Activated CD4-positive, alpha-beta memory T cell treated with anti-CD3 and anti-CD28 coated beads for 36 hours (primary cell): ENCODE measurements at regions of chr17 and their contacts with region 1.

Region 1: GRCh38 chr17:7484067-7484918 is at the start of gene POLR2A:
- DNase-seq: peak; percentile 97
- H3K4me3 Mint-ChIP-seq: peak within 1 kb of the TSS; percentile 98
- H3K27ac Mint-ChIP-seq: peak within 1 kb of the TSS; percentile 100
- H3K4me1 Mint-ChIP-seq: peaks cover 69% of the 10 kb centered on the region
- H3K27me3 Mint-ChIP-seq: no peaks in the 10 kb centered on the region
- total RNA-seq, gene POLR2A: 180 to 187 TPM

Region 2: GRCh38 chr17:7306911-7307686 is 177.2 kb before region 1 on chr17 and contains the start of gene EIF5A:
- CTCF ChIA-PET with region 1: no interaction called
- POLR2A ChIA-PET with region 1: interaction called, 5 read pairs
- intact Hi-C with region 1: loop called (anchors 1 kb)
- DNase-seq: peak; percentile 100
- H3K4me3 Mint-ChIP-seq: peak within 1 kb of the TSS; percentile 85
- H3K27ac Mint-ChIP-seq: peak within 1 kb of the TSS; percentile 97
- H3K4me1 Mint-ChIP-seq: peaks cover 29% of the 10 kb centered on the region
- H3K27me3 Mint-ChIP-seq: peaks cover 2% of the 10 kb centered on the region
- total RNA-seq, gene EIF5A: 774 to 776 TPM

Region 3: DNA sequence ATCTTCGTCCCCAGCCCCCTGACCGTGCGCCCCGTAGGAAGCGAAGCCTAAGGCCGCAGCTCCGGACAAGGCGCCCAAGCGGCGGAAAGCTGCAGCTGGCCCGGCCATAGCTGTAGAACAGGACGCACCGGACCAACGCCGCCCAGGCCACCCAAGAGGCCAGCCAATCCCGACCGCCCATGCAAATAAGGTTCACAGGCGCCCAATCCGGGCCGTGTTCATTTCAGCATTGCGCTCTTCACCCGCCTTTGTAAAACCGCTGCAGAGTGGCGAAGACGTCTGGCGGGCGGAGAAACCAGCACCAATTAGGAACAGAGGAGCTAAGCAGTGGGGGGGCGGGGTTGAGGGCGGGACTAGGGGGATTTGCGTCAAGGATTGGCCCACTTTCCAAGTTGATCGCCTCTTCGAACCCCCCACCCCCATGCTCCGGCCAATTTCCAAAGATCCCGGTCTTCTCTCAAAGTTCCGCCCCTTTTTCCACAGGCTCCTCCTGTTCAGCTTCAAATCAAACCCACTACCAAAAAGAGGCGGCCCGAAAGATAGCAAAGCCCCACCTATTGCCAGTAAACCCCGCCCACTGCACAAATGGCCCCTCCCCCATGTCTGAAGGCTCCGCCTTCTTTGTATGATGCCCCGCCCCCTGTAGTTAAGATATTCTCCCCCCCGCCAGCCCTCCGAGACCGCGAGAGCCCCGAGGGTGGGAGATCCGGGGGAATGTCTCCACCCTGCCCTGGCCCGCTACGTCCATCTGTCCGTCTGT is 80.1 kb before region 1 on chr17 and contains the start of gene TMEM256:
- CTCF ChIA-PET with region 1: no interaction called
- POLR2A ChIA-PET with region 1: interaction called, 5 read pairs
- intact Hi-C with region 1: loop called (anchors 1 kb)
- DNase-seq: peak; percentile 99
- H3K4me3 Mint-ChIP-seq: peak within 1 kb of the TSS; percentile 97
- H3K27ac Mint-ChIP-seq: peak within 1 kb of the TSS; percentile 92
- H3K4me1 Mint-ChIP-seq: peaks cover 25% of the 10 kb centered on the region
- H3K27me3 Mint-ChIP-seq: no peaks in the 10 kb centered on the region
- total RNA-seq, gene TMEM256: 87.0 to 88.5 TPM

Region 4: GRCh38 chr17:7454980-7455379 is 29.3 kb before region 1 on chr17:
- CTCF ChIA-PET with region 1: no interaction called
- POLR2A ChIA-PET with region 1: interaction called, 4 read pairs
- intact Hi-C with region 1: loop called (anchors 1 kb)
- DNase-seq: no peak
- H3K4me3 Mint-ChIP-seq: peak overlapping the region; percentile 93
- H3K27ac Mint-ChIP-seq: peak overlapping the region; percentile 96
- H3K4me1 Mint-ChIP-seq: peaks cover 13% of the 10 kb centered on the region
- H3K27me3 Mint-ChIP-seq: no peaks in the 10 kb centered on the region

Region 5: GRCh38 chr17:7572588-7573323 is 88.5 kb after region 1 on chr17:
- CTCF ChIA-PET with region 1: no interaction called
- POLR2A ChIA-PET with region 1: interaction called, 7 read pairs
- intact Hi-C with region 1: loop called (anchors 1 kb)
- DNase-seq: peak; percentile 100
- H3K4me3 Mint-ChIP-seq: peak overlapping the region; percentile 99
- H3K27ac Mint-ChIP-seq: peak overlapping the region; percentile 100
- H3K4me1 Mint-ChIP-seq: peaks cover 50% of the 10 kb centered on the region
- H3K27me3 Mint-ChIP-seq: peaks cover 2% of the 10 kb centered on the region

Region 6: DNA sequence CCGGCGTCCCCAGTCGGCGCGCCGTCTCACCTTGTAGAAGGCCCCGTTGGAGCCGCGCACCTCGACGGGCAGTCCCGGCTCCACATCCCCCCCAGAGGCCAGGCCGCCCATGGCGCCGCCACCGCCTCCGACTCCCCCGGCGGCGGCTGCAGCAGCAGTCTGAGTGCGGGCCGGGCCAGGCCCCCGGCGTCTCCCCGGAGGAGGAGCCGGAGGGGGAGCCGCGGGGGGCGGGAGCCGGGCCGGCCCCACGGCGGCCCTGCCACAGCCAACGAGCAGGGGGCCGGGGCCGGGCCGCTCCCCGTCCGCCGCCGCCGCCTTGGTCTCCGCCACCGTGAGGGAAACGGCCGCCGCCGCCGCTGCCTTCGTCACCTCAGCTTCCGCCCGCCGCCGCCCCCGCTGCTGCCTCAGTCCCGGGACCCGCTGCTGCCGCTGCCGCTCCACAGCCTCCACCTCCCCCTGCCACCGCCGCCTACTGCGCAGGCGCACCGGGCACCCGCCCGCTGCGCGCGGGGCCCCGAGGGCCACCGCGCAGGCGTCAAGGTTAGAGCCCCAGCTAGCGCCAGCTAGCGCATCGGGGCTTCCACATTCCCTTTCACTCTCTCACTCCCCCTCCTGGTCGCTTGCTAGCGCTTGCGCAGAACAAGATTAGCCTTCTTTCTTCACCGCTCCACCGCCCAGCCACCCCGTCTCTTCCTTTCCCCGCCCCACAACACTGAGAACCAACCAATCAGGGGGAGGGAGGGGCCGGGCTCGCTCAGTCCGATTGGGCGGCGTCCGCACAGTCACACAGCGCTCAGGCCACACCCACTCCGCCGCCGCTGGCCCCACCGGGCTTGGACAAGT is 130.3 kb after region 1 on chr17 and contains the start of gene FXR2:
- CTCF ChIA-PET with region 1: no interaction called
- POLR2A ChIA-PET with region 1: no interaction called
- intact Hi-C with region 1: loop called (anchors 1 kb)
- DNase-seq: peak; percentile 100
- H3K4me3 Mint-ChIP-seq: peak within 1 kb of the TSS; percentile 87
- H3K27ac Mint-ChIP-seq: peak within 1 kb of the TSS; percentile 87
- H3K4me1 Mint-ChIP-seq: peaks cover 31% of the 10 kb centered on the region
- H3K27me3 Mint-ChIP-seq: no peaks in the 10 kb centered on the region
- total RNA-seq, gene FXR2: 37.5 to 40.1 TPM